ENCODE measurements at regions of chr9 and their contacts with region 1.

Region 1: GRCh38 chr9:78525986-78526560 is 229.1 kb downstream of the PSAT1 start:
- DNase-seq: no peak
- ATAC-seq: no peak
- H3K4me3 ChIP-seq: no peak overlapping the region
- H3K4me3 Mint-ChIP-seq: no peak overlapping the region
- H3K27ac ChIP-seq: no peak overlapping the region
- H3K27ac Mint-ChIP-seq: no peak overlapping the region
- H3K4me1 ChIP-seq: no peaks in the 10 kb centered on the region
- H3K4me1 Mint-ChIP-seq: no peaks in the 10 kb centered on the region
- H3K27me3 ChIP-seq: no peaks in the 10 kb centered on the region
- H3K27me3 Mint-ChIP-seq: peaks cover 0 to 3% (median 0%) of the 10 kb centered on the region in 5 donors

Region 2: DNA sequence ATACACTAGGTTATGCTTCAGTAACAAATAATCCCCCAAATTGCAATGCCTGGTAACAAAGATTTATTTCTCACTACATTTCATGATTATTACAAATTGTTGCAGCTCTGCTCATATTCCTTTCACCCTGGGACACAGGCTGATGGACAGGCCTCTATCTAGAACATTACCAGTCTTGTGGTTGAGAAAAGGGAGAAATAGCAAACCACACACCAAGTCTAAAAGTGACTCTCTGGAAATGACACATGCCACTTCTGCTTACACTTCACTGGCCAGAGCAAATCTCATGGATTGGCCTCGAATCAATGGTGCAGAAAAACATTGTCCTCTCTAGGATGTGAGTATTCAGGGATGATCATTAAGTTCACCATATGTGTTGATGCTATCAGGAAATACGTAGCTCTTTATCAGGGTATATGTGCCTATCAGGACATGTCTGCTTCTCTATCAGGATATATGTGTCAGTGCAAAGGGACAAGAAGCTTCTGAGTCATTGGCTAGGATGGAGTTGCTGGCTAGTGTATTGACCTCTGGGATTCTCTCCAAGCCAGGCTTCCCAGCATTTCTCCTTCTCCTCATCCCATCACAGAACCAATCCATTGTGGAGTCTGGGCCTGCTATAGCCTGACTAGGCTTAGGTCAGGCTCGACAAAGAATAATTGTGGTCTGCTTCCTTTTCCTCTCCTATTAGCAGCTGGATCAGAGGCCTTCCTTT is 381.3 kb before region 1 on chr9:
- CTCF ChIA-PET with region 1: no interaction called
- POLR2A ChIA-PET with region 1: no interaction called
- intact Hi-C with region 1: no loop called
- DNase-seq: no peak
- ATAC-seq: no peak
- H3K4me3 ChIP-seq: no peak overlapping the region
- H3K4me3 Mint-ChIP-seq: no peak overlapping the region
- H3K27ac ChIP-seq: no peak overlapping the region
- H3K27ac Mint-ChIP-seq: peak overlapping the region in 1 of 9 donors; percentile 35
- H3K4me1 ChIP-seq: no peaks in the 10 kb centered on the region
- H3K4me1 Mint-ChIP-seq: peaks cover 0 to 12% (median 0%) of the 10 kb centered on the region in 7 donors
- H3K27me3 ChIP-seq: no peaks in the 10 kb centered on the region
- H3K27me3 Mint-ChIP-seq: no peaks in the 10 kb centered on the region

Region 3: GRCh38 chr9:78462616-78463015 is 63.5 kb before region 1 on chr9:
- CTCF ChIA-PET with region 1: no interaction called
- POLR2A ChIA-PET with region 1: no interaction called
- intact Hi-C with region 1: loop called in 1 of 2 experiments (anchors 10 kb)
- DNase-seq: no peak
- ATAC-seq: no peak
- H3K4me3 ChIP-seq: no peak overlapping the region
- H3K4me3 Mint-ChIP-seq: no peak overlapping the region
- H3K27ac ChIP-seq: no peak overlapping the region
- H3K27ac Mint-ChIP-seq: no peak overlapping the region
- H3K4me1 ChIP-seq: no peaks in the 10 kb centered on the region
- H3K4me1 Mint-ChIP-seq: no peaks in the 10 kb centered on the region
- H3K27me3 ChIP-seq: no peaks in the 10 kb centered on the region
- H3K27me3 Mint-ChIP-seq: peaks cover 0 to 17% (median 13%) of the 10 kb centered on the region in 5 donors

Measured in naive thymus-derived CD4-positive, alpha-beta T cell (primary cell).